Right cardiac atrium (tissue), 5 donors: ENCODE measurements at regions of chr12 and their contacts with region 1.

Region 1: DNA sequence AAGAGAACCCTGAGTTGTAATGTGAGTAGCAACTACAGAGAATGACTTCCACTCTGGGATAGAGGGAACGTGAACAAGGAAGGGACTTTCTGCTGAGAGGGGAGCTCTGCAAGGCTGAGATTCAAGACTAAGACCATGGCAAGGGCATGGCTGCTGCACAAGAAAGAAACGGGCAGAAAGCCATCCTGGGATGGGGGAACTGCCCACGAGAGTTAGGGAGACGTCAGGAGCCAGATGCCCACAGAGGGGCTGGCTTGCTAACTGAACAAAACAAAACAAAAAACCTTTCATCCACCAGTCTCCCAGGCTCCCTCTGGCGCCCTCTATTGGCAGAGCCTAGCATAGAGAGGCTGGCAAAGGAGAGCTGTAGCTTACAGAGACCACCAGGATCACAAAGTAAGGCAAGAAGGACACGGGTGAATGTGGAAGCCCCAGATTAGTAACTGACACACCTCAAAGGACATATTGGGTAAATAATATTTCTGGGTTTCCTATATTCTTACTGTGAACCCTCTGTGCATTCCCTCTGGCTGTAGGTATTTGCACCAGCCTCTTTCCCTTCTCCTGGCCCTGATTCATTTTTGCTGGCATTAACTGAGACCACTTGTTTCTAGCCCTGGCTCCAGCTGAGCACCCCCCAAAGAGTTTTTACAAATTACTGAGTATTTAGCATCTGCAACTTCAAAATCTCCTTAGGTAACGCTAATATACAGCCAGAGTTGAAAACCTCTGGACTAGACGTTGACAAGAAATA is 338.3 kb downstream of the EMP1 start:
- DNase-seq: peak; percentile 65 to 91 (median 87)
- ATAC-seq: peak in 1 of 2 donors; percentile 66
- H3K4me3 ChIP-seq: peak overlapping the region; percentile 41
- H3K27ac ChIP-seq: no peak overlapping the region
- H3K4me1 ChIP-seq: no peaks in the 10 kb centered on the region
- H3K27me3 ChIP-seq: no peaks in the 10 kb centered on the region

Region 2: DNA sequence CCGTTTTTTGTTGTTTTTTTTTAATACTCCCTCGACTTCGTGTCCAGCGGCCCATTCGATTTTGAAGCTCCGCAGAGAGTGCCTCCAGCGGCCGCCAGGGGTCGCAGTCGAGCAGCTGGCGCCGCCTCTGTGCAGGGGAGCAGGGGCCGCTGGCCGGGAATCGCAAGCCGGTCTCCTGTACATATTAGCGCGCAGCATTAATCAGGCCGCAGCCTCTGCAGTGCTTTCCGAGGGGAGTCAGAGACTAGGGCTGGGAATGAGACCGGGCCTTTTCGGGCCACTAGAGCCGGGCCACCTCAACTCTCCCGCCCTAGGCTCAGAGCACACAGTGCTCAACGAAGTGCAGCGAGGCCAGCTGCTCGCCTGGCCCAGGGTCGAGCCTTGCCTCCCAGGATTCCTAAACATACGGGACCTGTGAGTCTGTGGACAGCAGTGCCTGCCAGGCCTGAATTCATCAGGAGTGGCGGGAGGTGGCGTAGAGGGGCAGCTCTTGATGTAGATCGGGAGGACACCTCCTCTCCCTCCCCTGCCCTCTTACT is 256.5 kb before region 1 on chr12:
- intact Hi-C with region 1: loop called in 3 of 4 experiments (anchors 10 kb)
- DNase-seq: peak; percentile 76 to 91 (median 91)
- ATAC-seq: peak; percentile 95
- H3K4me3 ChIP-seq: no peak overlapping the region
- H3K27ac ChIP-seq: no peak overlapping the region
- H3K4me1 ChIP-seq: no peaks in the 10 kb centered on the region
- H3K27me3 ChIP-seq: no peaks in the 10 kb centered on the region

Region 3: DNA sequence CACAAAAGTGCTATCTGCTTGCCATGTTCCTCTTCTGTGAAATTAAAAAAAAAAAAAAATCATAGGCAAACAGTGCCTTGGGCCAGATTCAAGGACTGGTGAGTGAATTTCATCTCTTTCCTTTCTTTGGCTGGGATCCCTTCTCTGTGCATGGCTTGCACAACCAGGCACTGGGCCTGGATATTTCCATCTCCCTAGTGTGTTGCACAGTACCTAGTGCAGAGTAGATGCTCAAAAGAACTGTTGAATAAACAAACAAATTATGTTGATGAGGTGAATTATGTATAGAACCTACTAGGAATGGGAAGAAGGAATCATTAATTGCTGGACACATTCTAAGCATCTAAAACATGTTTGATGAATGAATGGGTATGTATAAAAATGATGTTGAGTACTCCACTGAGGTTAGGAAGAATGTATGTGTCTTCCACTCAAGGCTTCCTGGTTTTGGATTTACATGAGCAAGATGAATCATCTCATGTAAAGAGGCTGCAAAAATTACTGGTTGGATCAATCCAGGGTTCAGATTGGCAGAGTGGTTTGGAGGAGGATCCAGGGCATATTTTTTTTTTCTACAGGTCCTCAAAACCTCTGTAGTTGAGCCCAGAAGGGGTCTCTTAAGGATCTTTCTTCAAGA is 245.1 kb before region 1 on chr12:
- intact Hi-C with region 1: loop called in 1 of 4 experiments (anchors 10 kb)
- DNase-seq: peak in 2 of 3 donors; percentile 47 to 64
- ATAC-seq: peak; percentile 71 to 88
- H3K4me3 ChIP-seq: no peak overlapping the region
- H3K27ac ChIP-seq: no peak overlapping the region
- H3K4me1 ChIP-seq: no peaks in the 10 kb centered on the region
- H3K27me3 ChIP-seq: no peaks in the 10 kb centered on the region

Region 4: DNA sequence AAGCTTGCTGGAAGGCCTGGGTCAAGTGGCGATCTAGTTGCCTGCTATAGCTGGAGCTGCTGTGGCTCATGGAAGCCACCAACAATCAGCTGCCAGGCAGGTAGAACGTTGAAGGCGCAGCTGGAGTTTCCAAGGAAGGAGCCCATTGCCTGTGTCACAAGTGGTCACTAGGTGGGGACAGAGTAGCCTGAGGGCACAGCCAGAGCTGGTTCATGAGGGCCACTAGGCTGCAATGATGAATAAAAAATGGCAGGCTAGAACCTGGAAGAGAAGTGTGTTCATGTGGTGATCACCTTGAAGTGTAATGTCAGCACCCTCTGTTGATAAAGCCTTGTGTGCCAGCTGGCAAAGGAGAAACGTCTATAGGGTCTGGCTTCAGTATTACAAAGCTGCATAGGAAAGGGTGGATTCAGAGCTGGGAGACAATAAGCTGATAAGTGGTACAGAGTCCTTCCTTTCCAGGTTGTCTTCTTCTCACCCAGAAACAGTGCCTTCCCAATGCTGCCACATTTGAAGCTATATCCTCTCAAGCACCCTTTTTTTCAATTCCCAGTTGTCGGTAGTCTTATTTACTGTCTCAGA is 172.5 kb before region 1 on chr12:
- intact Hi-C with region 1: loop called in 1 of 4 experiments (anchors 5 kb)
- DNase-seq: peak; percentile 56 to 81 (median 61)
- ATAC-seq: peak; percentile 60 to 75
- H3K4me3 ChIP-seq: no peak overlapping the region
- H3K27ac ChIP-seq: no peak overlapping the region
- H3K4me1 ChIP-seq: no peaks in the 10 kb centered on the region
- H3K27me3 ChIP-seq: peaks cover 3% of the 10 kb centered on the region